ENCODE measurements at regions of chr16 and their contacts with region 1.

Region 1: GRCh38 chr16:48623304-48624016 is 13.5 kb upstream of the N4BP1 start:
- DNase-seq: peak; percentile 79
- H3K4me3 ChIP-seq: peak overlapping the region in 2 of 3 experiments; percentile 12 to 37
- H3K27ac ChIP-seq: no peak overlapping the region
- H3K4me1 ChIP-seq: peaks cover 2% of the 10 kb centered on the region
- H3K27me3 ChIP-seq: peaks cover 2 to 6% of the 10 kb centered on the region in 2 experiments
- CTCF ChIP-seq: peak; percentile 99
- POLR2A ChIP-seq: no peak

Region 2: GRCh38 chr16:48231727-48232492 is 391.6 kb before region 1 on chr16:
- CTCF ChIA-PET with region 1: interaction called, 85 read pairs
- POLR2A ChIA-PET with region 1: no interaction called
- dilution Hi-C with region 1: no loop called
- intact Hi-C with region 1: loop called (anchors 2 kb)
- DNase-seq: peak; percentile 53
- H3K4me3 ChIP-seq: no peak overlapping the region
- H3K27ac ChIP-seq: no peak overlapping the region
- H3K4me1 ChIP-seq: no peaks in the 10 kb centered on the region
- H3K27me3 ChIP-seq: peaks cover 0 to 2% of the 10 kb centered on the region in 2 experiments
- CTCF ChIP-seq: peak; percentile 35 to 67
- POLR2A ChIP-seq: no peak

Region 3: GRCh38 chr16:48353565-48354163 is 269.8 kb before region 1 on chr16:
- CTCF ChIA-PET with region 1: interaction called, 131 read pairs
- POLR2A ChIA-PET with region 1: no interaction called
- dilution Hi-C with region 1: no loop called
- intact Hi-C with region 1: loop called (anchors 1 kb)
- DNase-seq: peak; percentile 75
- H3K4me3 ChIP-seq: no peak overlapping the region
- H3K27ac ChIP-seq: no peak overlapping the region
- H3K4me1 ChIP-seq: no peaks in the 10 kb centered on the region
- H3K27me3 ChIP-seq: no peaks in the 10 kb centered on the region
- CTCF ChIP-seq: peak; percentile 83 to 88
- POLR2A ChIP-seq: no peak

Region 4: GRCh38 chr16:48385272-48386150 is 237.9 kb before region 1 on chr16 and contains the start of gene SIAH1:
- CTCF ChIA-PET with region 1: interaction called, 17 read pairs
- POLR2A ChIA-PET with region 1: no interaction called
- dilution Hi-C with region 1: no loop called
- intact Hi-C with region 1: no loop called
- DNase-seq: peak; percentile 81
- H3K4me3 ChIP-seq: peak within 1 kb of the TSS; percentile 64 to 99 (median 92)
- H3K27ac ChIP-seq: peak within 1 kb of the TSS; percentile 92
- H3K4me1 ChIP-seq: peaks cover 18% of the 10 kb centered on the region
- H3K27me3 ChIP-seq: no peaks in the 10 kb centered on the region
- CTCF ChIP-seq: no peak
- POLR2A ChIP-seq: peak; percentile 77
- total RNA-seq, gene SIAH1: 19.9 and 21.3 TPM in 2 replicates

Region 5: GRCh38 chr16:48542020-48542473 is 81.4 kb before region 1 on chr16:
- CTCF ChIA-PET with region 1: interaction called, 21 read pairs
- POLR2A ChIA-PET with region 1: no interaction called
- dilution Hi-C with region 1: no loop called
- intact Hi-C with region 1: loop called (anchors 1 kb)
- DNase-seq: peak; percentile 49
- H3K4me3 ChIP-seq: no peak overlapping the region
- H3K27ac ChIP-seq: no peak overlapping the region
- H3K4me1 ChIP-seq: no peaks in the 10 kb centered on the region
- H3K27me3 ChIP-seq: no peaks in the 10 kb centered on the region
- CTCF ChIP-seq: peak; percentile 41 to 57
- POLR2A ChIP-seq: no peak

Region 6: DNA sequence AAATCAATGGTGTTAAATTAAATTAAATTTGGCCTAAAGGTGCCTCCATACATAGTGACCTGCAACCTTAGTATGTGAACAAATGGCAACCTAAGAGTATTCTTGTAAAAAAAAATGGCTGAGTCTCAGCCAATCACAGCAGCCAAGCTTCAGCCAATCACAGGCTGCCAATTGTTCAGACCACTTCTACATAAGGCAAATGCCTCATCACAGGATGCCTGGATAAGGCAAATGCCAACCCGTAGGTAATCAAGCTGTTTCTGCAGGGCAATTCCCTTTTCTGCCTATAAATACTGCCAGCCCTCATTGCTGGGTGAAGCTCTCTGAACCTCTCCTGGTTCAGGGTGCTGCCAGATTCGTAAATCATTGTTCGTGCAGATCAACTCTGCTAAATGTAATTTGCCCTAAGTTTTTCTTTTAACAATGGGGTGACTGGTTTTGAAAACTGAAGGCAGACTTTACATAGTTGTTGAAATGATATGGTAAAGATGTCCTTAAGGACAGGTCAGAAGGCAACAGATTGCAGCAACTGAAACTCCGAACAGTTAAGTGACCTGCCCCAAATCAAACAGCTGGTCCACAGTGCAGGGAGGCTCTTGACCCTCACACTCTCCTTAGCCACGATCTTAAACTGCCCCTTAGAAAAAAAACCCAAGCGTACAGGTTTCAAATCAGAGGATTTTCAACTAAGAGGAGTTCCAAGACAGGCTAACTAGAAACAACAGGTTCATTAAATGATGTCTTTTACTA is 63.8 kb before region 1 on chr16:
- CTCF ChIA-PET with region 1: interaction called, 17 read pairs
- POLR2A ChIA-PET with region 1: no interaction called
- dilution Hi-C with region 1: no loop called
- intact Hi-C with region 1: no loop called
- DNase-seq: no peak
- H3K4me3 ChIP-seq: no peak overlapping the region
- H3K27ac ChIP-seq: no peak overlapping the region
- H3K4me1 ChIP-seq: peaks cover 16% of the 10 kb centered on the region
- H3K27me3 ChIP-seq: no peaks in the 10 kb centered on the region
- CTCF ChIP-seq: no peak
- POLR2A ChIP-seq: no peak

Region 7: GRCh38 chr16:48603647-48604376 is 19.6 kb before region 1 on chr16:
- CTCF ChIA-PET with region 1: interaction called, 23 read pairs
- POLR2A ChIA-PET with region 1: no interaction called
- dilution Hi-C with region 1: no loop called
- intact Hi-C with region 1: no loop called
- DNase-seq: no peak
- H3K4me3 ChIP-seq: no peak overlapping the region
- H3K27ac ChIP-seq: no peak overlapping the region
- H3K4me1 ChIP-seq: peaks cover 7% of the 10 kb centered on the region
- H3K27me3 ChIP-seq: no peaks in the 10 kb centered on the region
- CTCF ChIP-seq: no peak
- POLR2A ChIP-seq: no peak